ENCODE measurements at regions of chr14 and their contacts with region 1.

Region 1: DNA sequence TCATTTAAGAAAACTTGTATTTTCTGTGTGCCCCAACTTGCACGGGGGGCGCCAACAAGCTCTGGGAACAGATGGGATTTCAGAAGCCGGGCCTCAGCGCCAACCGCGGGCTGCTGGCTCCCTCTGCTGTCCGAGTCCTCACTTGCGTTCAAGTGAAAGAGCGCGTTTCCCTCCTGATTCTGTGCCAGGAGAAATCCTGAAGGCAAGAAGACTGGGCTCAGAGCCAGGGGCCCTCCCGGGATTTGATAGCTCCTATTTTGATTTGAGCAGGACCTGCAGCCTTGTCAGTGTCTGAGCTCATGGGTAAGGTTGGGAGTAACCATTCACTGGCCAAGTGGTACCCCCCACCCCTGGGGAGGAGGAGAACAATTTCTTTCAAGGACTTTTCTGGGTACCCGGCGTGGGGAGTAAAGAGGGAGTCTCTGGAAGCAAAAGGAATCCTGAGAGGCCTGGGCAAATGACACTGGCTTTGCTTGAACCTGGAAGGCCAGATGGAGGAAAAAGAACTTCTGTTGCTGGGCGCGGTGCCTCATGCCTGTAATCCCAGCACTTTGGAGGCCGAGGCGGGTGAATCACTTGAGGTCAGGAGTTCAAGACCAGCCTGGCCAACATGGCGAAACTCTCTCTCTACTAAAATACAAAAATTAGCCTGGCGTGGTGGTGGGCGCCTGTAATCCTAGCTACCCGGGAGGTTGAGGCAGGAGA is 179.0 kb upstream of the RGS6 start:
- DNase-seq: peak; percentile 85
- ATAC-seq: peak; percentile 90
- H3K4me3 ChIP-seq: no peak overlapping the region; the same call in 1 of the 2 replicates
- H3K27ac ChIP-seq: no peak overlapping the region
- H3K4me1 ChIP-seq: peaks cover 4% of the 10 kb centered on the region; the same call in 1 of the 2 replicates
- H3K27me3 ChIP-seq: no peaks in the 10 kb centered on the region
- CTCF ChIP-seq: peak; percentile 97
- POLR2A ChIP-seq: peak; percentile 64
- RAD21 ChIP-seq: peak; percentile 100

Region 2: DNA sequence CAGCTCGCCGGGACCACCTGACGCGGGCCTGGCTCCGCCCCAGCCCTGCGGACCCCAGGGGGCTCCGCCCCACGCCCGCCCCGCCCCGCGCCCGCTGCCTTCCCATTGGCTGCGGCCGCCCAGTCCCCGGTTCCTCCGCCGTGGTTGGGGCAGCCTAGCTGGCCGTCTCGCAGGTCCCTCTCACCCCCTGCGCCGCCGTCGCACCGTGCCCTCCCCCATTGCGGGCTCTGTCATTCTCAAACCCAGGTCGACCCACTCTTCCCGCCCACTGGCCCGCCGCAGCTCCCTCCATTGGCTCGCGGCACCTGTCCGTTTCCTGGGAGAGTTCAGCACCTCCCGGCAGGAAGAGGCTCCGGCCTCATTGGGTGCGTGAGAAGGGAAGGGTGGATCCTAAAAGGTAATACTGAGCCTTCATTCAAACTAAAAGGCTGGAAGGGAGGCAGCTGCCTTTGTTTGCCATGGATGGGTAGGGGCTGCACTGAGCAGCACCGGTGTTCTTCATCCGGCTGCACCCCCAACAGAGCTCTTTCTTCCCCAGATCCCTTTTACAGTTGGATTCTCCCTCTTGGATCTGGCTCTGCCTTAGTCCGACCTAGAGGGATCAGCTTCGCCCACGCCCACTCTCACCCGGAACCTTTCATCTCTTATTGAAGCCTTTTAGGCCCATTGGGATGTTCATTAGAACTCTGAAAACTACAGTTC is 943.6 kb before region 1 on chr14:
- CTCF ChIA-PET with region 1: no interaction called
- POLR2A ChIA-PET with region 1: no interaction called
- dilution Hi-C with region 1: no loop called
- in situ Hi-C with region 1: no loop called
- intact Hi-C with region 1: loop called (anchors 10 kb)
- DNase-seq: peak; percentile 26
- ATAC-seq: peak; percentile 93
- H3K4me3 ChIP-seq: peak overlapping the region; percentile 47
- H3K27ac ChIP-seq: no peak overlapping the region
- H3K4me1 ChIP-seq: no peaks in the 10 kb centered on the region
- H3K27me3 ChIP-seq: peaks cover 32% of the 10 kb centered on the region
- CTCF ChIP-seq: no peak
- POLR2A ChIP-seq: no peak
- RAD21 ChIP-seq: no peak

Region 3: GRCh38 chr14:70972107-70972976 is 780.9 kb before region 1 on chr14:
- CTCF ChIA-PET with region 1: no interaction called
- POLR2A ChIA-PET with region 1: no interaction called
- dilution Hi-C with region 1: no loop called
- in situ Hi-C with region 1: no loop called
- intact Hi-C with region 1: loop called (anchors 5 kb)
- DNase-seq: peak; percentile 88
- ATAC-seq: peak; percentile 90
- H3K4me3 ChIP-seq: no peak overlapping the region
- H3K27ac ChIP-seq: no peak overlapping the region
- H3K4me1 ChIP-seq: peaks cover 2% of the 10 kb centered on the region; the same call in 1 of the 2 replicates
- H3K27me3 ChIP-seq: no peaks in the 10 kb centered on the region
- CTCF ChIP-seq: peak; percentile 91
- POLR2A ChIP-seq: peak; percentile 22; the same call in 1 of the 2 replicates
- RAD21 ChIP-seq: peak; percentile 90

Region 4: GRCh38 chr14:71103662-71104484 is 649.4 kb before region 1 on chr14:
- CTCF ChIA-PET with region 1: interaction called, 3 read pairs
- POLR2A ChIA-PET with region 1: no interaction called
- dilution Hi-C with region 1: no loop called
- in situ Hi-C with region 1: no loop called
- intact Hi-C with region 1: loop called (anchors 1 kb)
- DNase-seq: peak; percentile 80
- ATAC-seq: peak; percentile 83
- H3K4me3 ChIP-seq: no peak overlapping the region
- H3K27ac ChIP-seq: no peak overlapping the region
- H3K4me1 ChIP-seq: peaks cover 7% of the 10 kb centered on the region
- H3K27me3 ChIP-seq: no peaks in the 10 kb centered on the region
- CTCF ChIP-seq: peak; percentile 83
- POLR2A ChIP-seq: no peak
- RAD21 ChIP-seq: peak; percentile 80

Region 5: DNA sequence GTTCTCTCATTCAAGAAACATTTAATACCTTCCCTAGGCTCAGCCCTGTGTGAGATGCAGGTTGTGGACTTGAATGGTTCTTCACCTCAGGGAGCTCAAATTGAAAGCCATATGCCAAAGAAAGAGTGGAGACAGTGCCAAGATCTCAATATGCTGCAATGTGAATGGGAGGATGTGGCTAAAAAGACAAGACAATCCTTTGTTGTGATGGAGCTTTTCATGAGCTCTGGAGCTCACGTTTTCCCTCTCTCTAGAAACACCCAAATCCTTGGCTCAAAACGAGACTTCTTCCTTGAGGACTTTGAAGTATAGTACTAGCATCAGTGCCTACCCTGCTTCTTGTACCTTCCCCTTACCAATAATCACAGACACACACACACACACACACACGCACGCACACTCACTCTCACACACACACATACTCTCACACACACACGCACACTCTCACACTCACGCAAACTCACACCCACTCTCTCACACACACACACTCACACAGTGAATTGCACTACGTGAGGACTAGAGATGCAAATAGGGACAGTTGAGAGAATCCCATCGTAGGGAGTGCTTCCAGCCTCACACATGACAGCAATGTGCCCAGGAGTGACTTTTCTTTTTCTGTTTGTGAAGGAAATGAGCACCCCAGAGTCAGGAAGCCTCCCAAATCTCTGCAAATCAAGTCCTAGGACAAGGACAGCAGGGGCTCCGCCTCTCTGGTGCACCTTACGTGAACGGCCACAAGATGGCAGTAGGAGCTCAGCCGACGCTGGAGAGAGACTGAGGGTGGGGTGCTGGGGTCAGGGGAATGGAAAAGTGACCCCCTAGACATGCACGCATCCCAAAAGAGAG is 614.6 kb before region 1 on chr14:
- CTCF ChIA-PET with region 1: interaction called, 13 read pairs
- POLR2A ChIA-PET with region 1: no interaction called
- dilution Hi-C with region 1: no loop called
- in situ Hi-C with region 1: loop called (anchors 5 kb)
- intact Hi-C with region 1: loop called (anchors 1 kb)
- DNase-seq: peak; percentile 48
- ATAC-seq: peak; percentile 73
- H3K4me3 ChIP-seq: no peak overlapping the region
- H3K27ac ChIP-seq: no peak overlapping the region
- H3K4me1 ChIP-seq: peaks cover 16% of the 10 kb centered on the region
- H3K27me3 ChIP-seq: no peaks in the 10 kb centered on the region
- CTCF ChIP-seq: peak; percentile 86
- POLR2A ChIP-seq: peak; percentile 57; the same call in 1 of the 2 replicates
- RAD21 ChIP-seq: peak; percentile 97

Region 6: GRCh38 chr14:71720978-71721624 is 32.2 kb before region 1 on chr14:
- CTCF ChIA-PET with region 1: interaction called, 5 read pairs
- POLR2A ChIA-PET with region 1: no interaction called
- dilution Hi-C with region 1: no loop called
- in situ Hi-C with region 1: no loop called
- intact Hi-C with region 1: loop called (anchors 1 kb)
- DNase-seq: peak; percentile 85
- ATAC-seq: peak; percentile 92
- H3K4me3 ChIP-seq: no peak overlapping the region
- H3K27ac ChIP-seq: no peak overlapping the region
- H3K4me1 ChIP-seq: peaks cover 13% of the 10 kb centered on the region
- H3K27me3 ChIP-seq: no peaks in the 10 kb centered on the region
- CTCF ChIP-seq: peak; percentile 84
- POLR2A ChIP-seq: 0 out of 2 replicates have a peak, but pooled peaks have one; percentile 42
- RAD21 ChIP-seq: peak; percentile 89

Region 7: GRCh38 chr14:71776471-71777360 is 23.4 kb after region 1 on chr14:
- CTCF ChIA-PET with region 1: no interaction called
- POLR2A ChIA-PET with region 1: no interaction called
- dilution Hi-C with region 1: no loop called
- in situ Hi-C with region 1: no loop called
- intact Hi-C with region 1: no loop called
- DNase-seq: peak; percentile 13
- ATAC-seq: 0 out of 2 replicates have a peak, but pooled peaks have one; percentile 27
- H3K4me3 ChIP-seq: no peak overlapping the region
- H3K27ac ChIP-seq: no peak overlapping the region
- H3K4me1 ChIP-seq: no peaks in the 10 kb centered on the region
- H3K27me3 ChIP-seq: no peaks in the 10 kb centered on the region
- CTCF ChIP-seq: no peak
- POLR2A ChIP-seq: no peak
- RAD21 ChIP-seq: no peak